ENCODE measurements at regions of chr10 and their contacts with region 1.

Region 1: GRCh38 chr10:35218339-35218955 is 91.8 kb downstream of the CREM start:
- DNase-seq: peak; percentile 86
- ATAC-seq: peak; percentile 86
- H3K4me3 ChIP-seq: no peak overlapping the region
- H3K27ac ChIP-seq: no peak overlapping the region
- H3K4me1 ChIP-seq: peaks cover 0 to 13% of the 10 kb centered on the region in 2 experiments; a peak in 3 of 4 replicates
- H3K27me3 ChIP-seq: no peaks in the 10 kb centered on the region
- CTCF ChIP-seq: peak; percentile 68 to 93 (median 92)
- POLR2A ChIP-seq: no peak
- RAD21 ChIP-seq: peak; percentile 85

Region 2: GRCh38 chr10:34721208-34721840 is 497.1 kb before region 1 on chr10:
- CTCF ChIA-PET with region 1: no interaction called
- POLR2A ChIA-PET with region 1: no interaction called
- RAD21 ChIA-PET with region 1: no interaction called
- intact Hi-C with region 1: no loop called
- DNase-seq: no peak
- ATAC-seq: peak; percentile 88
- H3K4me3 ChIP-seq: no peak overlapping the region
- H3K27ac ChIP-seq: peak overlapping the region; percentile 22; the same call in 1 of the 2 replicates
- H3K4me1 ChIP-seq: peaks cover 37 to 46% of the 10 kb centered on the region in 2 experiments
- H3K27me3 ChIP-seq: no peaks in the 10 kb centered on the region
- CTCF ChIP-seq: no peak
- POLR2A ChIP-seq: no peak
- RAD21 ChIP-seq: no peak

Region 3: DNA sequence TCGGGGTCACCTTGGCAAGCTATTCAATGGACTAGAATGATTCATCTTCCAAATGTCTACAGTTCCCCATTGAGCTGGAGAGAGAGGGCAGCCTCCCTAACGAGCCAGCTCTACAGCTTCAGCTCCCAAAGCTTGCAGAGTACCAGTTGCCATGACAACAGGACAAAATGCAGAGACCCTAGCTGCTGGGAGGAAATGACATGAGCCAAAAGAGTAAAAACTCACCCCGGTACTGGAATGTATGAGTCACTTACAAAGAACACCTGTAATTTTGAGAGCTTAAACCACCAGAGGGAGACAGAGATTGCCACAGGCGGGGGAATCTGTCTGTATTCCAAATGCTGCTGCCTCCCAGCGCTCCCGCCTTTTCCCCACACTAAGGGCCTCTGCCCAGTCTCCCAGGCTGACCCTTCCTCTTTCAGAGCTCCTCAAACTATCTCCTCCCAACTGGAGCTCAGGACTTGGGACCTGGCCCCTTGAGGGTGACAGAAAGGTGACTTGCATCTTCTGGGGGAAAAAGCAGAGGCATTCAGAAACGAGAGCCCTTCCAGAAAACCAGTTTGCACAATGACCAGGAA is 223.8 kb before region 1 on chr10:
- CTCF ChIA-PET with region 1: interaction called, 7 read pairs
- POLR2A ChIA-PET with region 1: no interaction called
- RAD21 ChIA-PET with region 1: interaction called in 1 of 2 experiments, 4 read pairs
- intact Hi-C with region 1: loop called (anchors 2 kb)
- DNase-seq: peak; percentile 76
- ATAC-seq: peak; percentile 92
- H3K4me3 ChIP-seq: no peak overlapping the region
- H3K27ac ChIP-seq: no peak overlapping the region
- H3K4me1 ChIP-seq: peaks cover 8 to 16% of the 10 kb centered on the region in 2 experiments; a peak in 3 of 4 replicates
- H3K27me3 ChIP-seq: no peaks in the 10 kb centered on the region
- CTCF ChIP-seq: peak; percentile 75 to 84 (median 83)
- POLR2A ChIP-seq: no peak
- RAD21 ChIP-seq: peak; percentile 95

Region 4: GRCh38 chr10:35119378-35119777 is 99.1 kb before region 1 on chr10:
- CTCF ChIA-PET with region 1: interaction called, 21 read pairs
- POLR2A ChIA-PET with region 1: interaction called, 3 read pairs
- RAD21 ChIA-PET with region 1: no interaction called
- intact Hi-C with region 1: loop called (anchors 1 kb)
- DNase-seq: no peak
- ATAC-seq: no peak
- H3K4me3 ChIP-seq: no peak overlapping the region
- H3K27ac ChIP-seq: no peak overlapping the region
- H3K4me1 ChIP-seq: no peaks in the 10 kb centered on the region
- H3K27me3 ChIP-seq: no peaks in the 10 kb centered on the region
- CTCF ChIP-seq: no peak
- POLR2A ChIP-seq: no peak
- RAD21 ChIP-seq: no peak